A673 (cell line): ENCODE measurements at regions of chr11 and their contacts with region 1.

Region 1: DNA sequence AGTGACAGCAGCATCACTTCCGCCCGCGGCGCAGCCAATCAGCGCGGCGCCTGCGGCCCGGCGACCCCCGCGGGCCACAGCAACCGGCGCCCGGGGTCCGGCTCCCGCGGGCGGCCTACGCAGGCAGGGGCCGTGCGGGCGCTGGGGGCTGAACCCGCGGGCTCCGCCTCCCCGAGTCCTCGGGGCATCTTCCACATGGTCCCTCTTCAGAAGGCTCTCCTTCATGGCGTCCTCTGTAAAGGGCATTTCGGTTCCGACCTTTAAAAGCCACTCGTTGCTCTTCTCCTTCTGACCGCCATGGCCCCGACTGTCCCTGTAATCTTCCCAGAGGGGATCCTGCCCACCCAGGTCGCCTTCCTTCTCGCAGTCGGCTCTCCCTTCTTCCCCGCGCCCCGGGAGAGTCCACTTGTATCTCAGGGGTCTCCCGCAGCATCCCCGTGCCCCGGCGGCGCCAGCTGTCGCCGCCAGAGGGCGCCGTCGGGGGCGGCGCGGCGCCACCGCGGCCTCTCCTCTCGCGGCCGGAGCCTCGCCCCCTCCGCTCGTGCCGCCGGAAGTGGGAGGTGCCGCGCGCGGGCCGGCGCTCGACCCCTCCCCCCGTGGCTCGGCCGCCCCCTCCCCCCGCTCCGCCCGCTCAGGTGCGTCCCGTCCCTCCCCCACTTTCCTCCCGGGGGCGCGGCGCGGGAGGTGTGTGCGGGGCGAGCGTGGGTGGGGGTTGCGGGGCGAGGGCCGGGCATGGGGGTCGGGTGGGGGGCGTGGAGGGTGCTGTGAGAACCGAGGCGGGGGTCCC is at the start of gene RNF214:
- DNase-seq: peak; percentile 90
- H3K4me3 ChIP-seq: peak within 1 kb of the TSS; percentile 99
- H3K27ac ChIP-seq: peak within 1 kb of the TSS; percentile 88
- H3K4me1 ChIP-seq: peaks cover 14% of the 10 kb centered on the region
- H3K27me3 ChIP-seq: no peaks in the 10 kb centered on the region
- CTCF ChIP-seq: peak; percentile 81
- total RNA-seq, gene RNF214: 37.8 and 50.3 TPM in 2 replicates

Region 2: GRCh38 chr11:117817368-117818040 is 585.2 kb after region 1 on chr11:
- CTCF ChIA-PET with region 1: no interaction called
- POLR2A ChIA-PET with region 1: no interaction called
- intact Hi-C with region 1: loop called (anchors 5 kb)
- DNase-seq: peak; percentile 89
- H3K4me3 ChIP-seq: no peak overlapping the region
- H3K27ac ChIP-seq: no peak overlapping the region
- H3K4me1 ChIP-seq: peaks cover 35% of the 10 kb centered on the region
- H3K27me3 ChIP-seq: no peaks in the 10 kb centered on the region
- CTCF ChIP-seq: peak; percentile 99

Region 3: GRCh38 chr11:118010738-118011461 is 778.6 kb after region 1 on chr11:
- CTCF ChIA-PET with region 1: no interaction called
- POLR2A ChIA-PET with region 1: no interaction called
- intact Hi-C with region 1: no loop called
- DNase-seq: no peak
- H3K4me3 ChIP-seq: no peak overlapping the region
- H3K27ac ChIP-seq: no peak overlapping the region
- H3K4me1 ChIP-seq: no peaks in the 10 kb centered on the region
- H3K27me3 ChIP-seq: peaks cover 26% of the 10 kb centered on the region
- CTCF ChIP-seq: no peak